ENCODE measurements at regions of chr10 and their contacts with region 1.

Region 1: DNA sequence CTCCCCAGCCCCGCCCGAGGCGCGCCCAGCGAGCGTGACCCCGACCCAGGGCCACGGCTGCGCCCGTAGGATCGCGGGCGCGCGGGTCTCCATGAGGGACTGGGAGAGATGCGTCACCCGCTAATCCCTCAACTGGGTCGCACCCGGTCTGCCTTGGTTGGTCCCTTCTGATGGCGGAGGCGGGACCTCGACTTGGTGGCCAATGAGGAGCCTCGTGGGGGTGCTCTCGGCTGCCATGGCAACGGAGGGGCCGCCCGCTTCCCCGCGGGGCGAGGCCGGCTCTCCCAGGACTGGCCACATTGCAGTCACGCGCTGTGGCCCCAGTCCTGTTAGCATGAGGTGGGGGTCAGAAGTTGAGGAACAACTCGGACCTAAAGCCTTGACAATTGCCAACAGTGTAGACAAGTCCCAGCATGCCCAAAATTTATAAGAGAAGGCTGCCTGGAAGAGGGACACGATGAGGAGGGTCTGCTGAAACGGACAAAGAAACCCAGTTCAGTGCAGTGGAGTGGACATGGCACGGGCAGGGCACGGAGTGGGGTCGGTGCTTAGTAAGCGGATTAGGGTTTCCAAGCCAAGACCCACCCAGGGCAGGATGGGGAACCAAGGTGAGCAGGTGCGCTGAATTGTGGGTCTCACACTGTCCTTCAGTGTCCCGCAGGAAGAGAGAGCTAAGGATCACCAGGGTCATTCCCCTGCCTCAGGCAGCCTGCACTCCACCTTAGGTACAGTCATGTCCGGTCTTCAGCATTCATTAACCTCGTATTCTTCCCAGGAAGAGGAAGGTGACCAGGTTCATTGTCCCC is 24.4 kb downstream of the DDIT4 start:
- DNase-seq: peak; percentile 89
- ATAC-seq: peak; percentile 72
- H3K4me3 Mint-ChIP-seq: peak overlapping the region; percentile 86
- H3K27ac Mint-ChIP-seq: peak overlapping the region; percentile 100
- H3K4me1 Mint-ChIP-seq: peaks cover 73% of the 10 kb centered on the region
- H3K27me3 Mint-ChIP-seq: no peaks in the 10 kb centered on the region
- CTCF ChIP-seq: no peak

Region 2: DNA sequence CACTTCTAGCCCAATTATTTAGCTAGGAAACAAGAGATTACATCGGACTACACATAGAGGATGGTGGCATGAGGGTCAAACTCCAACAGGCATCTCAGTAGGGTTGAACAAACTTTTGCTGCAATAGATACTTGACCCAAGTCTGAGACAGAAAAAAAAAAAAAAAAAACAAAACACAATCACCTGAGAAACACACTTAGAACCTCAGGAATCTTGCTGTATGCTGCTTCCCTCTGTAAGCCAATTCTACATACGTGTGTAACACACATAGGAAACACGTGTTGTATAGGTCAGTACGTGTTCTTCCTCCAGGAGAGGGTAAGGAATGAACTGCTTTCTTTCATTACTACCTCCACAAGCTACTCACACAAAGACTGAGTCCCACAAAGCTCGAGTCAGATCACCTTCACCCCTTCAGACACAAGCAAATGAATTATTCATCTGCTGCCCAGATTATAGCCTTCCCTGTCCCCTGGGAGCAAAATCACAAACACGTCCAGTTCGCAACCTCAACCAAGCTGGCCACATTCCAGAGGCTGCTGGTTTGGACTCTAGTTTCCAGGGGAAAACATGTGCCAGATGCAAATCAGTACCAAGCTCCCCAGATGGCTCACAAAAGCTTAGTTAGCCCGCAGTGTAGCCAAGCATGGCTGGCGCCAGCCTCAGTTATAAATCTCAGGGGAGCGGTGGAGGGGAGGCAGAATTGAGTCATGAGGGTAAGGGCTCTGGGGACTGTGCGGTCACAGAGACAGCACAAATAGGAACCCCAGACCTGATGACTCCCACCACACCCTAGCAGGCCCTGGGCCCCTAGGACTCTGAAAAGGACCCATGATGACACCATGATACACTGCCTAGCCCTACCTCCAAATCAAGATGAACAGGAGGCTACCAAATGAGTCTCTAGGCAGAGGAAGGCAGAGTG is 462.2 kb before region 1 on chr10:
- CTCF ChIA-PET with region 1: no interaction called
- POLR2A ChIA-PET with region 1: no interaction called
- intact Hi-C with region 1: loop called (anchors 2 kb)
- DNase-seq: peak; percentile 84
- ATAC-seq: peak; percentile 92
- H3K4me3 Mint-ChIP-seq: peak overlapping the region; percentile 79
- H3K27ac Mint-ChIP-seq: peak overlapping the region; percentile 95
- H3K4me1 Mint-ChIP-seq: peaks cover 88% of the 10 kb centered on the region
- H3K27me3 Mint-ChIP-seq: no peaks in the 10 kb centered on the region
- CTCF ChIP-seq: no peak

Region 3: DNA sequence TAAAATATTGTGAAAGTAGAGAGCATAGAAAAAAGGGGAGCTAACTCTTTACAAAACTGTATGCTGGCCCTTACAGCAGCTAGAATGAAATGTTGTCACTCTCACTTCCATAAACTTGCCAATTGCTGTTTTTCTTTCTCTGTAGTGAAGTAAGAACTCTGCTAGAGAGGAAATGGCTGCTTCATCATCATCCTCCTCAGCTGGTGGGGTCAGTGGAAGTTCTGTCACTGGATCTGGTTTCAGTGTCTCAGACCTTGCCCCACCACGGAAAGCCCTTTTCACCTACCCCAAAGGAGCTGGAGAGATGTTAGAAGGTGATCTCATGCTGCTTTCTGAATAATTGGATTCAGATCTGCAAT is 74.4 kb before region 1 on chr10:
- CTCF ChIA-PET with region 1: interaction called, 4 read pairs
- POLR2A ChIA-PET with region 1: interaction called, 217 read pairs
- intact Hi-C with region 1: no loop called
- DNase-seq: no peak
- ATAC-seq: peak; percentile 47
- H3K4me3 Mint-ChIP-seq: peak overlapping the region; percentile 59
- H3K27ac Mint-ChIP-seq: peak overlapping the region; percentile 84
- H3K4me1 Mint-ChIP-seq: peaks cover 67% of the 10 kb centered on the region
- H3K27me3 Mint-ChIP-seq: no peaks in the 10 kb centered on the region
- CTCF ChIP-seq: no peak

Region 4: GRCh38 chr10:72254813-72255568 is 43.2 kb before region 1 on chr10:
- CTCF ChIA-PET with region 1: interaction called, 3 read pairs
- POLR2A ChIA-PET with region 1: interaction called, 145 read pairs
- intact Hi-C with region 1: no loop called
- DNase-seq: no peak
- ATAC-seq: no peak
- H3K4me3 Mint-ChIP-seq: no peak overlapping the region
- H3K27ac Mint-ChIP-seq: peak overlapping the region; percentile 83
- H3K4me1 Mint-ChIP-seq: peaks cover 76% of the 10 kb centered on the region
- H3K27me3 Mint-ChIP-seq: no peaks in the 10 kb centered on the region
- CTCF ChIP-seq: no peak

Region 5: DNA sequence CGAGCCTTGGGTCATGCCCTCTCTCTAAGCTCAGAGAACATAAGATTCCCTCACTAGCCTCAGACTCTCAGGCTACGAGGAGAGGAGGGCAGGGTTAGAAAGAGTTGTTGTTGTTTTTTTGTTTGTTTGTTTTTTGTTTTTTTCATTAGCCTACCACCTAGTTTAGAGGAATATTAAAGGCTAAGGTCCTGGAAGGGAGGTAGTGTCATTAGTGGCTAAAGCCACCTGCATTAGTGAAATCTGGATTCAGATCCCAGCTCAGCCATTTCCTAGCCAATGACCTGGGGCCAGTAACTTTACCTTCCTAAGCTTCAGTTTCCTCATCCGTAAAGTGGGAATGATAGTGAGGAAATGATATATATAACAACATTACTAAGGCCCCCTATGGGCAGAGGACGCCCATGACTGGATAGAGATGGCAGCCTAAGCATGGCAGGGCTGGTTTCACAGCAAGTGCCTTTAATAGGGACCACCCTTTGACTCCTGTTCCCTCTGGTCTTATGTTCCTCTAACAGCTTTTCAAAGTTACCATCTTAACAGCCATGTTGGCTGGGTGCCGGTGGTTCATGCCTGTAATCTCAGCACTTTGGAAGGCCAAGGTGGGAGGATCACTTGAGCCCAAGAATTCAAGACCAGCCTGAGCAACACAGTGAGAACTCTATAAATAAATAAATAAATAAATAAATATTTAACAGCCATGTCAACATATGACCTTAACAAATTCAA is 19.3 kb before region 1 on chr10:
- CTCF ChIA-PET with region 1: interaction called, 21 read pairs
- POLR2A ChIA-PET with region 1: interaction called, 377 read pairs
- intact Hi-C with region 1: no loop called
- DNase-seq: no peak
- ATAC-seq: no peak
- H3K4me3 Mint-ChIP-seq: no peak overlapping the region
- H3K27ac Mint-ChIP-seq: no peak overlapping the region
- H3K4me1 Mint-ChIP-seq: peaks cover 36% of the 10 kb centered on the region
- H3K27me3 Mint-ChIP-seq: no peaks in the 10 kb centered on the region
- CTCF ChIP-seq: no peak

Region 6: DNA sequence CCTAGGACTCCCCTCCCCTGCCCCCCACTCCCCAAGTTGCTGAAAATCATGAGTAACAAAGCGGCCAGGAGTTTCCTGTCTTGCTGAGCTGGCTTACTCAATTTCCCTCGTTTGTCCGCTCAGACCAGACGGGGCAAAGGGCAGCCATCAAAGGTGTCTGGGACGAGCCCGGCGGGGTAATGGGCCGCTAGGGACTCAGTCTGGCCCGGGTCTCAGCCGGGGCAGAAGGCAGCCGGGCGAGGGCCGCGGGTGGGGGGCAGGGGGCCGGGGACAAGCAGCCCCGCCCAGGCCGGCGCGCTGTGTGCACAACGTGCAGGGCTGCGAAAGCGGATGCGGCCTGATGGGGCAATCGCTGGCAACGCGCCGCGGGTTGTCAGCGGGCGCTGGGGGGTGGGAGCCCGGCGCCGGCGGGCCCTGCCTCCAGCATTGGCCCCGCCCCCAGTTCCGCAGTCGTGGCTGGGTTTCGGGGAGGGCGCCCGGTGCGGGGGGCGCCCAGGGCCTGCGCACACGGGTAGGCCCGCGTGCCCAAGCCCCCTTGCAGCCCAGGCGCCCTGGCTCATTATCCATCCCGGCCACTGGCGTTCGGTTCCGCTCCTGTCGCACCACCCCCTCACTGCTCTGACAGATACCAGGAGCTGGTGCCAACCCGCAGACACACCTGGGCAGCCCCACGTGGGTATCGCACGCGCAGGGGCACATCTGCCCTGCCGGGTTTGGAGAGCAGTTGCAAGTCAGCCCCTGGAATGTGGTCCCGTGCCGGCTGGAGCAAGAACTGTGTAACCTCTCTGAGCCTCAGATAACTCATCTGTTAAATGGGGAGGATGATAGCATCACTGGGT is 21.5 kb after region 1 on chr10:
- CTCF ChIA-PET with region 1: interaction called, 33 read pairs
- POLR2A ChIA-PET with region 1: interaction called, 1,996 read pairs
- intact Hi-C with region 1: loop called (anchors 1 kb)
- DNase-seq: peak; percentile 87
- ATAC-seq: peak; percentile 52
- H3K4me3 Mint-ChIP-seq: peak overlapping the region; percentile 81
- H3K27ac Mint-ChIP-seq: peak overlapping the region; percentile 98
- H3K4me1 Mint-ChIP-seq: peaks cover 86% of the 10 kb centered on the region
- H3K27me3 Mint-ChIP-seq: no peaks in the 10 kb centered on the region
- CTCF ChIP-seq: no peak